CD8-positive, alpha-beta memory T cell (primary cell): ENCODE measurements at regions of chr13 and their contacts with region 1.

Region 1: DNA sequence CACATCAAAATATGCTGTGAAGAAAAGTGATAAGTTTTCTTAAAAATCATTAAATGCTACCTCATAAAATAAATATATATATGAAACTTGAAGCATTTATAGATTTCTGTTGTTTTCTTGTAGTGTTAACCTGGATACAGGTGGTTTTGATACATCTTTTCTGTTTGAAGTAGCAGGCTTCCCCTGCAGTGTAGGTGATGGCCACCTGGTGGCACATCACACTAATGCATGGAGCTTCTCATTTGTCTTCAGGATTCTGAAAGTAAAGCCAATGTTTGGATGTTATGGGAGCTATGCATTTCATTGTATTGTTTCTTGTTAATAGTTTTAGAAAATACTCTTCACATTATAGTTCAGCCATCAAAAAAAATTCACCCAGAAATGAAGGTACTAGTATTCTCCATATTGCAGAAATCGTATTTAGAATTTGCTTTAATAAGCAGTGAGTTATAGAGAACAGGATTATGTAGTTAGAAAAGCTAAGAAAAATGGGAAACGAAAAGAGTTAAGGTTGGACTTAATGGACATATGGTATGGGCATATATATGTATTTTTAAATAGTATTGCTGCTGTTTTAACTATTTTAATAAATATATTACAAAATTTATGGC is 18.7 kb downstream of the GPR180 start:
- DNase-seq: peak in 1 of 5 donors; percentile 19
- H3K4me3 ChIP-seq: no peak overlapping the region
- H3K4me3 Mint-ChIP-seq: no peak overlapping the region
- H3K27ac ChIP-seq: no peak overlapping the region
- H3K27ac Mint-ChIP-seq: no peak overlapping the region
- H3K4me1 ChIP-seq: no peaks in the 10 kb centered on the region
- H3K4me1 Mint-ChIP-seq: peaks cover 10 to 15% (median 13%) of the 10 kb centered on the region in 3 donors
- H3K27me3 ChIP-seq: no peaks in the 10 kb centered on the region
- H3K27me3 Mint-ChIP-seq: no peaks in the 10 kb centered on the region

Region 2: GRCh38 chr13:94435604-94436226 is 184.7 kb before region 1 on chr13:
- CTCF ChIA-PET with region 1: interaction called, 161 read pairs
- POLR2A ChIA-PET with region 1: no interaction called
- DNase-seq: peak in 2 of 5 donors; percentile 21 to 51
- H3K4me3 ChIP-seq: no peak overlapping the region
- H3K4me3 Mint-ChIP-seq: no peak overlapping the region
- H3K27ac ChIP-seq: no peak overlapping the region
- H3K27ac Mint-ChIP-seq: no peak overlapping the region
- H3K4me1 ChIP-seq: no peaks in the 10 kb centered on the region
- H3K4me1 Mint-ChIP-seq: no peaks in the 10 kb centered on the region
- H3K27me3 ChIP-seq: no peaks in the 10 kb centered on the region
- H3K27me3 Mint-ChIP-seq: peaks cover 0 to 3% of the 10 kb centered on the region in 2 donors

Region 3: GRCh38 chr13:94601446-94602431 is 18.7 kb before region 1 on chr13 and contains the start of gene GPR180:
- CTCF ChIA-PET with region 1: interaction called, 13 read pairs
- POLR2A ChIA-PET with region 1: no interaction called
- DNase-seq: peak; percentile 75 to 92 (median 86)
- H3K4me3 ChIP-seq: peak within 1 kb of the TSS; percentile 60
- H3K4me3 Mint-ChIP-seq: peak within 1 kb of the TSS; percentile 86 to 93 (median 88)
- H3K27ac ChIP-seq: peak within 1 kb of the TSS; percentile 68
- H3K27ac Mint-ChIP-seq: peak within 1 kb of the TSS; percentile 56 to 97 (median 87)
- H3K4me1 ChIP-seq: peaks cover 7% of the 10 kb centered on the region
- H3K4me1 Mint-ChIP-seq: peaks cover 22 to 34% (median 31%) of the 10 kb centered on the region in 3 donors
- H3K27me3 ChIP-seq: no peaks in the 10 kb centered on the region
- H3K27me3 Mint-ChIP-seq: no peaks in the 10 kb centered on the region
- total RNA-seq, gene GPR180: 6.6 to 6.9 TPM

Region 4: DNA sequence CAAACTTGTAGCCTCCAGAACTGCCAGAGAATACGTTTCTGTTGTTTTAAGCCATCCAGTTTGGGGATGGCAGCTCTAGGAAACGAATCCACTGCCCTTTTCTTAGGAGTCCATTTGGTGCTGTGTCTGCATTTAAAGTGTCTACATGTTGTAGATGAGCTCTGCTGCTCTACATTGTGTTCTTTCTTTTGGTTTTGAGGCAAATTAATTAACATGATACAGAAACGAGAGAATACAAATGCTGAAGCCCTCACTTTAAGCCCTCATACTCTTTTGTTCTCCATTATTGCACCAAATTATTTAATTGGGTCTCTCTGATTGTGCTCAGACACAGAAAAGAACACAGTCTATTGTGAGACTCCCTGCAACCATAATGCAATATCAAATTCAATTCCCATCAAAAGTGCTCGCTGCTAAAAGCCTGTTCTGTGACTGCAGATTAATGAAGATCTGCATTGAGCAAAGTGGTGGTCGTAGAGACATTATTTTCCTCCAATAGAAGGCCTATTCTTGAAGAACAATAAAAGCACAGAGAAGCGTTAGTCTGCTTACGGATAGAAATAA is 258.3 kb after region 1 on chr13:
- CTCF ChIA-PET with region 1: no interaction called
- POLR2A ChIA-PET with region 1: no interaction called
- DNase-seq: no peak
- H3K4me3 ChIP-seq: no peak overlapping the region
- H3K4me3 Mint-ChIP-seq: no peak overlapping the region
- H3K27ac ChIP-seq: no peak overlapping the region
- H3K27ac Mint-ChIP-seq: no peak overlapping the region
- H3K4me1 ChIP-seq: no peaks in the 10 kb centered on the region
- H3K4me1 Mint-ChIP-seq: no peaks in the 10 kb centered on the region
- H3K27me3 ChIP-seq: no peaks in the 10 kb centered on the region
- H3K27me3 Mint-ChIP-seq: no peaks in the 10 kb centered on the region